CD4-positive, alpha-beta memory T cell (primary cell): ENCODE measurements at regions of chr12 and their contacts with region 1.

Region 1: DNA sequence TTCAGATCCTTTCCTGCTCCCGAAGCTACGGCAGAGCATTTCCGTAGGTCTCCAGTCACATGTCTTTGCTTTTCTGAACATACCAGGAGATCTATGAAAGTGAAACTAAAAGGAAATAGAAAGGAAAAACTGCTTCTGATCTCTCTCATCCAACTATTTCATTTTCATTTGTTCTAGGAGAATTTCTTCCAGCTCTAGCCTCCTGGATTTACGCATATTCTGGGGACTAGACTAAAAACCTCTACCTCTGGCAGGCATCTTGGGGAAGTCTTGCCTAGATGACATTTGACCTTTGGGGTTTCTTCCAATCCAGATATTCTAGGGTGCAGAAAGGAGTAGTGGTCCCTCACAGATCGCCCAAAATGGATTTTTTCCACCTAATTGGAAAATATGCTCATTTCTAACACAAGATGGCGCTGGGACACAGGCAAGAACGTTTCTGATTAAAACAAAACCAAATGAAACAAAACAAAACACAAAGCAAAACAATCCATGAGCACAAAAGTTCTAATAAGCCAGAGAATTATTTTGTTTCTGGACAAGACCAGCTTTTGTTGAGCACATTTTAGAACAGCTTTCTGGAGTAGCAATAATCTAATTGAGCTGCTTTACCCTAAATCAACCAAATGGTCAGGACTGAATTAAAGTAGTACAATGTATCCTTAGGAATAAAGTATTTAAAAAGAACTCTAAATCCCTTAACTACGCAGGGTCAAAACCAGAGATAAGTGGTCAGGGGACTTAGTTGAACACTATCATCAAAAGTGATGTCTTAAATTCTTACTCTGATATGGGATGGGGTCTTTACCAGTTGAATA is 12.3 kb upstream of the PARP11 start:
- DNase-seq: peak; percentile 55 to 73 (median 70)
- H3K4me3 ChIP-seq: no peak overlapping the region
- H3K4me3 Mint-ChIP-seq: peak overlapping the region in 3 of 8 donors; percentile 19 to 25 (median 22)
- H3K27ac ChIP-seq: no peak overlapping the region
- H3K27ac Mint-ChIP-seq: peak overlapping the region; percentile 2 to 90 (median 53)
- H3K4me1 ChIP-seq: peaks cover 9% of the 10 kb centered on the region
- H3K4me1 Mint-ChIP-seq: peaks cover 12 to 25% (median 13%) of the 10 kb centered on the region in 4 donors
- H3K27me3 ChIP-seq: no peaks in the 10 kb centered on the region
- H3K27me3 Mint-ChIP-seq: peaks cover 5 to 7% of the 10 kb centered on the region in 2 donors

Region 2: GRCh38 chr12:3872800-3873636 is 12.5 kb before region 1 on chr12 and contains the start of gene PARP11:
- CTCF ChIA-PET with region 1: interaction called, 10 read pairs
- POLR2A ChIA-PET with region 1: interaction called, 7 read pairs
- intact Hi-C with region 1: no loop called
- DNase-seq: peak; percentile 97 to 98 (median 97)
- H3K4me3 ChIP-seq: peak within 1 kb of the TSS; percentile 53 to 87
- H3K4me3 Mint-ChIP-seq: peak within 1 kb of the TSS; percentile 95 to 99 (median 98)
- H3K27ac ChIP-seq: peak within 1 kb of the TSS; percentile 95
- H3K27ac Mint-ChIP-seq: peak within 1 kb of the TSS; percentile 95 to 100 (median 99)
- H3K4me1 ChIP-seq: peaks cover 50% of the 10 kb centered on the region
- H3K4me1 Mint-ChIP-seq: peaks cover 34 to 57% (median 40%) of the 10 kb centered on the region in 4 donors
- H3K27me3 ChIP-seq: no peaks in the 10 kb centered on the region
- H3K27me3 Mint-ChIP-seq: no peaks in the 10 kb centered on the region
- total RNA-seq, gene PARP11: 36.4 to 39.9 TPM

Region 3: GRCh38 chr12:3913278-3913677 is 27.8 kb after region 1 on chr12:
- CTCF ChIA-PET with region 1: interaction called, 4 read pairs
- POLR2A ChIA-PET with region 1: interaction called, 10 read pairs
- intact Hi-C with region 1: no loop called
- DNase-seq: no peak
- H3K4me3 ChIP-seq: no peak overlapping the region
- H3K4me3 Mint-ChIP-seq: peak overlapping the region in 1 of 8 donors; percentile 43
- H3K27ac ChIP-seq: no peak overlapping the region
- H3K27ac Mint-ChIP-seq: peak overlapping the region; percentile 4 to 87 (median 49)
- H3K4me1 ChIP-seq: peaks cover 2% of the 10 kb centered on the region
- H3K4me1 Mint-ChIP-seq: peaks cover 2 to 15% (median 4%) of the 10 kb centered on the region in 4 donors
- H3K27me3 ChIP-seq: no peaks in the 10 kb centered on the region
- H3K27me3 Mint-ChIP-seq: no peaks in the 10 kb centered on the region

Region 4: DNA sequence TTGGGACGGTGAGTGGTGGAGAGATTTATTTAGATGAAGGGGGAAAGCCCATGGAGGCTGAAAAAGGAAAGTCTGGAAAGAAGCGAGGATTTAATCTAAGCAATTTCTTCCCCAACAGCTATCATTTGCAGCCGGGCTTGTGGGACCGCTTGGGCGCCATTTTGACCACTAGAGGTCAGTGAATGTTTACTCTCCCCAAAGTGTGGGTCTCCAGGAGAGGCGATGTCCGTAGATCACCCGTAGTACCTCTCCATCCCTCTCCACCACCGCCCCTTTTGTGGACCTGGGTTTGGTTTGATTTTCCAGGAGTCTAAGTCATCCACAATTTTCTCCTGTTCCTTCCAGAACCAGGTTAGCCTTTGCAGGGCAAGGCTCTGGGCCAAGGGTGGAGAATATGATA is 79.0 kb after region 1 on chr12:
- CTCF ChIA-PET with region 1: interaction called, 458 read pairs
- POLR2A ChIA-PET with region 1: interaction called, 99 read pairs
- intact Hi-C with region 1: loop called (anchors 1 kb)
- DNase-seq: no peak
- H3K4me3 ChIP-seq: no peak overlapping the region
- H3K4me3 Mint-ChIP-seq: no peak overlapping the region
- H3K27ac ChIP-seq: no peak overlapping the region
- H3K27ac Mint-ChIP-seq: peak overlapping the region in 4 of 7 donors; percentile 8 to 83 (median 48)
- H3K4me1 ChIP-seq: peaks cover 20% of the 10 kb centered on the region
- H3K4me1 Mint-ChIP-seq: peaks cover 18 to 37% (median 26%) of the 10 kb centered on the region in 4 donors
- H3K27me3 ChIP-seq: no peaks in the 10 kb centered on the region
- H3K27me3 Mint-ChIP-seq: no peaks in the 10 kb centered on the region

Region 5: DNA sequence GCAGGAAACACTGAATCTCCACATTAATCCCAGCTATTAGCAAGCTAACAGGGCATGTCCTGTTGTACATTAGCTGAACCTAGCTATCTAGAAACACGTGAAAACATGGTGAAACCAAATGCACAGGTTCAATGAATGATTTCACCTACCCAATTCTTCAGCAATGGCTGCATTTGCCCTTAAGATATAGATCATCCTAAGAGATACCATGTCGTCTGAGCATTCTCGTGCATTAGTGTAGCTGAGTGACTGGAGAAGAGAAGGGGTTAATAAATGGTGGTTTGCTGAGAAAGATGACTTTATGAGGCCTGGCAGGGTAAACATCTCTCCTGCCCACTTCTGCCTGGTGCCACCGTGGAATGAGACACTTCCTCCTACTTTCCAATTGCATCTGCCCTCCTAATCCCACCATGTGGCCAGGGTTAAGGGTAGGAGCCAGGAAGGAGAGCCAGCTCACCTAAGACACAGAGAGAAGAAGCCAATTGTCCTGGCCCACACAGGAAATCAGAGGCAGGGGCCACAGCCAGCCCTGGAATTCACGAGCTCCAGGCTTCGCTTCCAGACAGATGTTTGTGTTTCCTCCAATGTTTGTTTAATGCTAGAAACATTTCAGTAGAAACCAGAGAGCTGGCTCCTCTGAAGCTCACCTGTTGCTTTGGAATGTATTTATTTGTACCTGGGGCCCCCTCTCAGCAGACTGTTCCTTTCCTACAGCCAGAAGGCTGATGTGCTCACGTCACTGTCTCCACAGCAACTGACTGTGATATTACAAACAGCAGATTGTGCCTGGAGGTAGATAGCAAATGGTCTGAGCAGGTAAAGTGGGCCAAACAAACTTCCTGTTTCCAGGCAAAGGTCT is 113.7 kb after region 1 on chr12:
- CTCF ChIA-PET with region 1: interaction called, 101 read pairs
- POLR2A ChIA-PET with region 1: interaction called, 48 read pairs
- intact Hi-C with region 1: loop called (anchors 1 kb)
- DNase-seq: peak; percentile 39 to 60 (median 55)
- H3K4me3 ChIP-seq: no peak overlapping the region
- H3K4me3 Mint-ChIP-seq: peak overlapping the region in 1 of 8 donors; percentile 15
- H3K27ac ChIP-seq: no peak overlapping the region
- H3K27ac Mint-ChIP-seq: peak overlapping the region in 6 of 7 donors; percentile 70 to 87 (median 84)
- H3K4me1 ChIP-seq: peaks cover 9% of the 10 kb centered on the region
- H3K4me1 Mint-ChIP-seq: peaks cover 7 to 30% (median 20%) of the 10 kb centered on the region in 4 donors
- H3K27me3 ChIP-seq: no peaks in the 10 kb centered on the region
- H3K27me3 Mint-ChIP-seq: no peaks in the 10 kb centered on the region

Region 6: DNA sequence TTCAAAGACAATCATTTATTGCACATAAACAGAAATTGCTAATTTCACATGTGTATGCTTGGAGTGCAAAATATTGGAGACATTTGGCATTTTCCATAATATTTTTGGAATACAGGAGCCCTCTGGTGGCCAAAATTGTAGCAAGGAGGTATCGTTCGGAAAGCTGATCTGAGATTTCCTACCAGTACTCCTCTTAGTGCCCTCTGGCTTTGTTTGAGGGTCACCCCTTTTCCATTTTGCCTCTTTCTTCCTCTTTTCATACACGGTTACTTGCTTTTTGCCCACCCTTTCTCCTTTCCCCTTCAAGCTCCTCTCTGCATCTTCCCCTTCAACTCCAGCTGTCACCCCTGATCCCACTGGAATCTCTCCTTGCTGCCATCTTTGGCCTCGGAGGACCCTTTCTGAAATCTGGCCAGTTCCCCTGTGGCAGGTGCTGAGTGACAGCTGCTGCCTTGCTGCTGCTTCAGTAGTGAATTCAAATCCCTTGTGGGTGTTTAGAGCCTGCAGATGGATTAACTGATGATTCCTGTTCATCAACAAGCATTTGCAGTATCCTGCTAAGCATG is 152.3 kb after region 1 on chr12:
- CTCF ChIA-PET with region 1: interaction called, 146 read pairs
- POLR2A ChIA-PET with region 1: interaction called, 15 read pairs
- intact Hi-C with region 1: loop called (anchors 1 kb)
- DNase-seq: peak in 4 of 5 donors; percentile 4 to 20 (median 8)
- H3K4me3 ChIP-seq: no peak overlapping the region
- H3K4me3 Mint-ChIP-seq: no peak overlapping the region
- H3K27ac ChIP-seq: no peak overlapping the region
- H3K27ac Mint-ChIP-seq: peak overlapping the region in 1 of 7 donors; percentile 39
- H3K4me1 ChIP-seq: no peaks in the 10 kb centered on the region
- H3K4me1 Mint-ChIP-seq: peaks cover 0 to 6% (median under 1%) of the 10 kb centered on the region in 4 donors
- H3K27me3 ChIP-seq: no peaks in the 10 kb centered on the region
- H3K27me3 Mint-ChIP-seq: no peaks in the 10 kb centered on the region